ENCODE measurements at regions of chr17 and their contacts with region 1.

Region 1: DNA sequence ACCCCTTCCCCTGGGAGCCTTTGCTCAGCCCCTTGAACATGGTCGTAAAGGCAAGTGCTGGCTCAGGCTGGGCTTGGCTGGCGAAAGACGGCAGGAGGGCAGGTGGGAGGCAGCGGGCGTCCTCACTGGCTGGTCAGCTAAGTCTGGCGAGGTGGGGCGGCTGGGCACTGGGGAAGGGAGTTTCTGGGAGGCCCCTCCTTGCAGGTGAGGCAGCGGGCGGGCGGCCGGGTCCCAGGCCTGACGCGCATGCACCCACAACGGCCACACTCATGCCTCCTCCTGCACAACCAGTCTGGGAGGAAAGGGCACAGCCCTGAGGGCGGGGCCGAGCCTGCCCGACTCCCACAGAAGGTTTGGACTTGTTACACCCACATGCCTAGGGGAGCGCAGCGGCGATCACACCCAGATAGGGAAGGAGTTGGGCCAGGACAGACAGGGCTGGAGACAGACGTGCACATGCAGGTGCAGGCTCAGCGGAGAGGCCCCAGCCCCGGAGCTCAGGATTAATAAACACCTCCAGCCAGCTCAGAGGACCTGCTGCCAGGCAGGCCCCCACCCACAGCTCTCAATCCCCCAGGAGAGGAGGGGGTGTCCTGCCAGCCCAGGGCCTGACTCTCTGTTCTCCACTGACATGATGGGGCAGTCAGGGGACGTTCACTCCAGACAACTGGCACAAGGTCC is at the start of gene EVPL:
- DNase-seq: peak; percentile 85
- ATAC-seq: peak; percentile 83
- H3K4me3 ChIP-seq: peak within 1 kb of the TSS; percentile 69 to 85
- H3K27ac ChIP-seq: peak within 1 kb of the TSS; percentile 96
- H3K4me1 ChIP-seq: peaks cover 47 to 65% of the 10 kb centered on the region in 2 experiments
- H3K27me3 ChIP-seq: no peaks in the 10 kb centered on the region
- CTCF ChIP-seq: no peak; a peak in 1 of 6 replicates
- POLR2A ChIP-seq: peak; percentile 73
- RAD21 ChIP-seq: no peak
- total RNA-seq, gene EVPL: 58.0 TPM

Region 2: DNA sequence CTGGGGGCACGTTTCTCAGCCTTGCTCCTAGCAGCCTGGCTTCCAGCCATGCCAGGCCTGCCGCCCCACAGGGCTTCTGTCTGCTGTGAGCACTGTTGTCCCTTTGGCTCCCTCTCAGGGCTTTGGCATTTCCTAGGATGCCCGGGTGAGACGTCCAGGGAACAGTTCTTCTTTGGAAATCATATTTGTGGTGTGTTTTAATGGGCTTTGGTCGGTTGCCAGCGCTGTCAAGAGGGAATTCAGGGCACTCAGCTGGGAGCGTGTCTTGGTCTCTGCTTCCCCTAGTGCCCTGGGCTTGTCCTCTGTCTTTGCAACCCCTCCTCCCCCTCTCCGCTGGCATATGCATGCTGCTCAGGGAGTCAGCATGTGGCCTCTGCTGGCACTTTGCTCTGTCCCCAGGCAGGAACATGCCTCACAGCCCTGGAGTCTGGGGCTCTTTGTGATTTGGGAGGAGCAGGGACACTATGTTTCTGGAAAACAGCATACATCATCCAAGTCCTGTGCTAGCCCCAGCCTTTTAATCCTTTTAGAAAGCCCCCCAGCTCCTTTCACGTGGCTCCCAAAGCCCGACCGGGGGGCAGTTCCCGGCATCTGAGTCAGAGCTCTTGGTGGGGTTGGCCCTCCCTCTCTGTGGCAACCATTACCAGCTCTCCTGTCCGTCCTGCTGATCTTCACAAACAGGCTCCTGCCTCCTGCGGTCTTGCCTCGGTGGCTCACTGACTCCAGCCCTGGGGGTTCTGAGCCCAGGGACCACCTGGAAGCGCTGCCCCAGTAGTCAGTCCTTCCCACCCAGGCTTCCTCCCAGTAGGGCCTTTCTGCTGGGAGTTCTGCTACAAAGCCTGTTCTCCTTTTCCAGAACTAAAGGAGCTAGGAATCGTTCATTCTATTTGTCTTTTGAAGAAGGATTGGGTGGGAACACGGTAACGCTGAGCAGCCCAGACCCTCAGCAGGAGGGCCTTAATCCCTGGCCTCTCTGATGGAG is 333.5 kb before region 1 on chr17:
- CTCF ChIA-PET with region 1: no interaction called
- POLR2A ChIA-PET with region 1: no interaction called
- RAD21 ChIA-PET with region 1: no interaction called
- intact Hi-C with region 1: no loop called
- DNase-seq: peak; percentile 76
- ATAC-seq: peak; percentile 69
- H3K4me3 ChIP-seq: no peak overlapping the region
- H3K27ac ChIP-seq: peak overlapping the region; percentile 94
- H3K4me1 ChIP-seq: peaks cover 85 to 99% of the 10 kb centered on the region in 2 experiments
- H3K27me3 ChIP-seq: no peaks in the 10 kb centered on the region
- CTCF ChIP-seq: no peak; a peak in 1 of 6 replicates
- POLR2A ChIP-seq: no peak
- RAD21 ChIP-seq: peak; percentile 42; the same call in 1 of the 2 replicates

Region 3: GRCh38 chr17:76072148-76072858 is 45.0 kb after region 1 on chr17 and contains the start of gene SRP68:
- CTCF ChIA-PET with region 1: interaction called, 4 read pairs
- POLR2A ChIA-PET with region 1: interaction called, 3 read pairs
- RAD21 ChIA-PET with region 1: no interaction called
- intact Hi-C with region 1: loop called (anchors 5 kb)
- DNase-seq: peak; percentile 87
- ATAC-seq: peak; percentile 100
- H3K4me3 ChIP-seq: peak within 1 kb of the TSS; percentile 63 to 78
- H3K27ac ChIP-seq: peak within 1 kb of the TSS; percentile 60
- H3K4me1 ChIP-seq: peaks cover 11 to 22% of the 10 kb centered on the region in 2 experiments
- H3K27me3 ChIP-seq: no peaks in the 10 kb centered on the region
- CTCF ChIP-seq: no peak
- POLR2A ChIP-seq: peak; percentile 87
- RAD21 ChIP-seq: no peak
- total RNA-seq, gene SRP68: 152 TPM

Region 4: GRCh38 chr17:76103274-76104139 is 76.2 kb after region 1 on chr17 and contains the start of gene EXOC7:
- CTCF ChIA-PET with region 1: no interaction called
- POLR2A ChIA-PET with region 1: interaction called, 3 read pairs
- RAD21 ChIA-PET with region 1: no interaction called
- intact Hi-C with region 1: loop called (anchors 5 kb)
- DNase-seq: peak; percentile 90
- ATAC-seq: peak; percentile 83
- H3K4me3 ChIP-seq: peak within 1 kb of the TSS; percentile 78 to 95
- H3K27ac ChIP-seq: peak within 1 kb of the TSS; percentile 89
- H3K4me1 ChIP-seq: peaks cover 12 to 26% of the 10 kb centered on the region in 2 experiments
- H3K27me3 ChIP-seq: no peaks in the 10 kb centered on the region
- CTCF ChIP-seq: no peak
- POLR2A ChIP-seq: peak; percentile 98
- RAD21 ChIP-seq: no peak
- total RNA-seq, gene EXOC7: 114 TPM